ENCODE measurements at regions of chr9 and their contacts with region 1.

Region 1: DNA sequence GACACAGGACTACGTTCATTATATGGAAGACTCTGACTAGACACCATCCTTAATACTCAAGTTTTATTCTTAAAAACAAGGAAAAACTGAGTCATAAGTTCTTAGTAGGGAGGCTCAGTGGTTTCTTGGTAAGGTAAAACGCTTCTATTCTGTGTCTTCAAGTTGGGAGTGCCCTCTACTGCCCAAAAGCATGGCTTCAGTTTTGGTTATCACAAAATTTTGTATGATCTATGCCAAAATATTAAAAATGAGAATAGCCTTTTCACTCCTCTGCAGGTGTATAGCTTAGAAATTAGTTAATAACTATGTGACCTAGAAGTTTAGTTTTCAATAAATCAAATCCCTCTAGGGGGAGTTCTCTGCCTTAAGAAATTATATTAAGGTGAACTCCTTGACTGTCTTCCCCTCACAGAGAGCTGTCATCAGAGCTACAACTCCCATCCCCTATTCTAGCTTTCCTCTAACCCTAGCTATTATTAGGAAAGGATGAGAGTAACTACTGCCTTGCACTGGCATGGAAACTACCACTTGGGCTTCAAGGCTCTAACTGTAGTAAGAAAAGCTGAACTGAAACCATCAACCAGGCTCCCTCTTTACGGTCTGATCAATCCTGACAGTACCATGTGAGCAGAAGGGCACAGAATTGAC is 189.7 kb downstream of the GNAQ start:
- DNase-seq: no peak
- H3K4me3 ChIP-seq: no peak overlapping the region
- H3K27ac ChIP-seq: no peak overlapping the region
- H3K4me1 ChIP-seq: peaks cover 24% of the 10 kb centered on the region
- H3K27me3 ChIP-seq: no peaks in the 10 kb centered on the region
- CTCF ChIP-seq: peak; percentile 12 to 42

Region 2: GRCh38 chr9:77751341-77752091 is 90.3 kb before region 1 on chr9:
- CTCF ChIA-PET with region 1: no interaction called
- dilution Hi-C with region 1: no loop called
- in situ Hi-C with region 1: no loop called
- intact Hi-C with region 1: loop called (anchors 5 kb)
- DNase-seq: peak; percentile 23
- H3K4me3 ChIP-seq: no peak overlapping the region
- H3K27ac ChIP-seq: no peak overlapping the region
- H3K4me1 ChIP-seq: no peaks in the 10 kb centered on the region
- H3K27me3 ChIP-seq: no peaks in the 10 kb centered on the region
- CTCF ChIP-seq: peak; percentile 43 to 56

Region 3: GRCh38 chr9:77884395-77884851 is 42.6 kb after region 1 on chr9:
- CTCF ChIA-PET with region 1: no interaction called
- dilution Hi-C with region 1: loop called (anchors 5 kb)
- in situ Hi-C with region 1: no loop called
- intact Hi-C with region 1: no loop called
- DNase-seq: peak; percentile 70
- H3K4me3 ChIP-seq: peak overlapping the region in 2 of 3 experiments; percentile 5 to 36
- H3K27ac ChIP-seq: peak overlapping the region; percentile 54
- H3K4me1 ChIP-seq: peaks cover 39% of the 10 kb centered on the region
- H3K27me3 ChIP-seq: no peaks in the 10 kb centered on the region
- CTCF ChIP-seq: no peak

Region 4: GRCh38 chr9:77977210-77977611 is 135.3 kb after region 1 on chr9:
- CTCF ChIA-PET with region 1: interaction called, 3 read pairs
- dilution Hi-C with region 1: no loop called
- in situ Hi-C with region 1: no loop called
- intact Hi-C with region 1: loop called (anchors 10 kb)
- DNase-seq: peak; percentile 84
- H3K4me3 ChIP-seq: no peak overlapping the region
- H3K27ac ChIP-seq: peak overlapping the region; percentile 33
- H3K4me1 ChIP-seq: peaks cover 47% of the 10 kb centered on the region
- H3K27me3 ChIP-seq: no peaks in the 10 kb centered on the region
- CTCF ChIP-seq: peak; percentile 46 to 70

Region 5: GRCh38 chr9:78213712-78214111 is 371.8 kb after region 1 on chr9:
- CTCF ChIA-PET with region 1: no interaction called
- dilution Hi-C with region 1: no loop called
- in situ Hi-C with region 1: no loop called
- intact Hi-C with region 1: loop called (anchors 10 kb)
- DNase-seq: peak; percentile 16
- H3K4me3 ChIP-seq: no peak overlapping the region
- H3K27ac ChIP-seq: no peak overlapping the region
- H3K4me1 ChIP-seq: no peaks in the 10 kb centered on the region
- H3K27me3 ChIP-seq: peaks cover 9% of the 10 kb centered on the region
- CTCF ChIP-seq: peak; percentile 15 to 39

Measured in mammary epithelial cell (primary cell).